Naive thymus-derived CD4-positive, alpha-beta T cell (primary cell): ENCODE measurements at regions of chr7 and their contacts with region 1.

Region 1: DNA sequence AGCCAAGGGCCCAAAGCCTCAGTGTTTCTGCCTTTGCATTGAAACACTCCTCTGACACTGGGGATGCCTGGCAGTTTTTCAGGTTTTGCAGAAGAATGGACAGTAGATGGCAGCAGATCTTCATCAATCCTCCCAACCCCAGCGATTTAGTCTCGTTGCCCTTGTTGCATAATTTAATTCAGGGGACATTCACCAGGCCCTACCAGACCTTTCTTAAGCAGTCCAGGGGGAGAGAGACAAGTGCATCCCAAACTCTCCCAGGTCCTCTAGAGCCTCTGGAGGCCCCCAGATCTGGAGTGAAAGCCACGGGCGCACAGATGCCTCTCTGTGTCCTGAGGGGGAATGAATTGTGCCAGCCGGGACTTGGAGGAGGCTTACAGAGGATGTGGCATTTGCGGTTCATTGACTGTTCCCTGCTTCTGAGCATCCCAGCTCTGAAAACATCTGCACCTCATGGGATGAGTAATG is 29.6 kb downstream of the MINDY4 start:
- DNase-seq: peak in 7 of 9 donors; percentile 7 to 59 (median 48)
- ATAC-seq: peak; percentile 54
- H3K4me3 ChIP-seq: no peak overlapping the region
- H3K4me3 Mint-ChIP-seq: no peak overlapping the region
- H3K27ac ChIP-seq: no peak overlapping the region
- H3K27ac Mint-ChIP-seq: no peak overlapping the region
- H3K4me1 ChIP-seq: peaks cover 0 to 6% of the 10 kb centered on the region in 2 donors
- H3K4me1 Mint-ChIP-seq: peaks cover 0 to 30% (median 4%) of the 10 kb centered on the region in 7 donors
- H3K27me3 ChIP-seq: no peaks in the 10 kb centered on the region
- H3K27me3 Mint-ChIP-seq: peaks cover 0 to 8% (median 0%) of the 10 kb centered on the region in 5 donors

Region 2: DNA sequence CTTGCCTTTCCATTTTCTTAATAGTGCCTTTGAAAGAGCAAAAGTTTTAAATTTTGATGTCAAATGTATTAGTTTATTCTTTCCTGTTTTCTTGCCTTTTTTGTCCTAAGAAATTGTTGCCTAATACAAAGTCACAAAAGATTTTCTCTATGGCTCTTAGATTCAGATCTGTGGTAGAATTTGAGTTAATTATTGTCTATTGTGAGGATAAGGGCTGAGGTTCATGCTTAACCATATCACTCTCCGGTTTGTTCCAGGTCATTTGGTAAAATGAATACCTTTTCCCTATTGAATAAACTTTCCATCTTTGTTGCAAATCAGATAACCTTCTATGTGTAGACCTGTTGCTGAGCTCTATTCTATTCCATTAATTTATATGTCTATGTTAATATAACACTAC is 418.2 kb before region 1 on chr7:
- CTCF ChIA-PET with region 1: no interaction called
- POLR2A ChIA-PET with region 1: no interaction called
- intact Hi-C with region 1: no loop called
- DNase-seq: no peak
- ATAC-seq: no peak
- H3K4me3 ChIP-seq: no peak overlapping the region
- H3K4me3 Mint-ChIP-seq: no peak overlapping the region
- H3K27ac ChIP-seq: no peak overlapping the region
- H3K27ac Mint-ChIP-seq: no peak overlapping the region
- H3K4me1 ChIP-seq: no peaks in the 10 kb centered on the region
- H3K4me1 Mint-ChIP-seq: peaks cover 0 to 6% (median 0%) of the 10 kb centered on the region in 7 donors
- H3K27me3 ChIP-seq: no peaks in the 10 kb centered on the region
- H3K27me3 Mint-ChIP-seq: no peaks in the 10 kb centered on the region

Region 3: DNA sequence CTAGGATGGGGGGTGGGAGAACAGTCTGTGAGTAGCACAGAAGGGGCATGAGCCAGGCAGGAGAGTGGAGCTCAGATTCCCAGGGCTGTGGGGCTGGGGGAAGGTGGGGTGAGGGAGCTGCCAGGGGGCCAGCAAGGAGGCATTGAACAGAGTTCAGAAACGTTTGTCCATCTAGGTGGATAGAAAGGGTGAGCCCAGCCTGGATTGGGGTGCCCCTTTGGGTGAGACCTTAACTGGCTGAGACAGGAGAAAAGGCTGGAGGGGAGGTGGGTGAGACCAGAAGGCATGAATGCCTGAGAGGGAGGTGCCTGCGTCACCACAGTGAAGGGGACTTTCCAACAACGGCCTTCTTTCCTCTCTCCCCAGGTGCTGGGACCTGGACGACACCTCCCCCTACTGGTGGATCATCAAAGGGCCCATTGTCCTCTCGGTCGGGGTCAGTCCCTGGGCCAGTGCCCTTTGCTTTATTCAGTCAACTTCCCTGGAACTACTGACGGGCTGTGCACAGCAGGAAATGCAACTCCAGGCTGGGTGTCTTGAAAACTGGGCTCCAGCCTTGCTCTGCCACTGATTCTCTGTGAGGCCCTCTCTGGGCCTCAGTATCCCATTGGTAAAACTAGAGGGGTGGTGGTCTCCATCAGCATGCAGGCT is 173.9 kb after region 1 on chr7:
- CTCF ChIA-PET with region 1: interaction called, 3 read pairs
- POLR2A ChIA-PET with region 1: no interaction called
- intact Hi-C with region 1: loop called in 1 of 2 experiments (anchors 1 kb)
- DNase-seq: peak in 1 of 9 donors; percentile 64
- ATAC-seq: peak; percentile 51
- H3K4me3 ChIP-seq: no peak overlapping the region
- H3K4me3 Mint-ChIP-seq: no peak overlapping the region
- H3K27ac ChIP-seq: no peak overlapping the region
- H3K27ac Mint-ChIP-seq: peak overlapping the region in 1 of 9 donors; percentile 84
- H3K4me1 ChIP-seq: no peaks in the 10 kb centered on the region
- H3K4me1 Mint-ChIP-seq: peaks cover 0 to 17% (median 0%) of the 10 kb centered on the region in 7 donors
- H3K27me3 ChIP-seq: peaks cover 0 to 4% of the 10 kb centered on the region in 2 donors
- H3K27me3 Mint-ChIP-seq: peaks cover 21 to 40% (median 29%) of the 10 kb centered on the region in 5 donors

Region 4: GRCh38 chr7:31122649-31123058 is 321.8 kb after region 1 on chr7:
- CTCF ChIA-PET with region 1: interaction called, 9 read pairs
- POLR2A ChIA-PET with region 1: no interaction called
- intact Hi-C with region 1: loop called in 1 of 2 experiments (anchors 1 kb)
- DNase-seq: peak in 4 of 9 donors; percentile 5 to 31 (median 12)
- ATAC-seq: peak; percentile 59
- H3K4me3 ChIP-seq: no peak overlapping the region
- H3K4me3 Mint-ChIP-seq: no peak overlapping the region
- H3K27ac ChIP-seq: no peak overlapping the region
- H3K27ac Mint-ChIP-seq: no peak overlapping the region
- H3K4me1 ChIP-seq: no peaks in the 10 kb centered on the region
- H3K4me1 Mint-ChIP-seq: no peaks in the 10 kb centered on the region
- H3K27me3 ChIP-seq: no peaks in the 10 kb centered on the region
- H3K27me3 Mint-ChIP-seq: peaks cover 6 to 41% (median 13%) of the 10 kb centered on the region in 5 donors

Region 5: GRCh38 chr7:31488562-31489203 is 687.9 kb after region 1 on chr7:
- CTCF ChIA-PET with region 1: no interaction called
- POLR2A ChIA-PET with region 1: no interaction called
- intact Hi-C with region 1: loop called in 1 of 2 experiments (anchors 5 kb)
- DNase-seq: peak in 2 of 9 donors; percentile 8 to 47
- ATAC-seq: no peak
- H3K4me3 ChIP-seq: no peak overlapping the region
- H3K4me3 Mint-ChIP-seq: no peak overlapping the region
- H3K27ac ChIP-seq: no peak overlapping the region
- H3K27ac Mint-ChIP-seq: no peak overlapping the region
- H3K4me1 ChIP-seq: no peaks in the 10 kb centered on the region
- H3K4me1 Mint-ChIP-seq: no peaks in the 10 kb centered on the region
- H3K27me3 ChIP-seq: no peaks in the 10 kb centered on the region
- H3K27me3 Mint-ChIP-seq: peaks cover 0 to 4% (median 0%) of the 10 kb centered on the region in 5 donors

Region 6: GRCh38 chr7:32479574-32480200 is 1678.9 kb after region 1 on chr7:
- CTCF ChIA-PET with region 1: no interaction called
- POLR2A ChIA-PET with region 1: no interaction called
- intact Hi-C with region 1: loop called in 1 of 2 experiments (anchors 10 kb)
- DNase-seq: no peak
- ATAC-seq: peak; percentile 48
- H3K4me3 ChIP-seq: no peak overlapping the region
- H3K4me3 Mint-ChIP-seq: no peak overlapping the region
- H3K27ac ChIP-seq: no peak overlapping the region
- H3K27ac Mint-ChIP-seq: no peak overlapping the region
- H3K4me1 ChIP-seq: no peaks in the 10 kb centered on the region
- H3K4me1 Mint-ChIP-seq: peaks cover 2 to 10% (median 7%) of the 10 kb centered on the region in 7 donors
- H3K27me3 ChIP-seq: no peaks in the 10 kb centered on the region
- H3K27me3 Mint-ChIP-seq: no peaks in the 10 kb centered on the region